CD4-positive, alpha-beta memory T cell (primary cell): ENCODE measurements at regions of chr1 and their contacts with region 1.

Region 1: DNA sequence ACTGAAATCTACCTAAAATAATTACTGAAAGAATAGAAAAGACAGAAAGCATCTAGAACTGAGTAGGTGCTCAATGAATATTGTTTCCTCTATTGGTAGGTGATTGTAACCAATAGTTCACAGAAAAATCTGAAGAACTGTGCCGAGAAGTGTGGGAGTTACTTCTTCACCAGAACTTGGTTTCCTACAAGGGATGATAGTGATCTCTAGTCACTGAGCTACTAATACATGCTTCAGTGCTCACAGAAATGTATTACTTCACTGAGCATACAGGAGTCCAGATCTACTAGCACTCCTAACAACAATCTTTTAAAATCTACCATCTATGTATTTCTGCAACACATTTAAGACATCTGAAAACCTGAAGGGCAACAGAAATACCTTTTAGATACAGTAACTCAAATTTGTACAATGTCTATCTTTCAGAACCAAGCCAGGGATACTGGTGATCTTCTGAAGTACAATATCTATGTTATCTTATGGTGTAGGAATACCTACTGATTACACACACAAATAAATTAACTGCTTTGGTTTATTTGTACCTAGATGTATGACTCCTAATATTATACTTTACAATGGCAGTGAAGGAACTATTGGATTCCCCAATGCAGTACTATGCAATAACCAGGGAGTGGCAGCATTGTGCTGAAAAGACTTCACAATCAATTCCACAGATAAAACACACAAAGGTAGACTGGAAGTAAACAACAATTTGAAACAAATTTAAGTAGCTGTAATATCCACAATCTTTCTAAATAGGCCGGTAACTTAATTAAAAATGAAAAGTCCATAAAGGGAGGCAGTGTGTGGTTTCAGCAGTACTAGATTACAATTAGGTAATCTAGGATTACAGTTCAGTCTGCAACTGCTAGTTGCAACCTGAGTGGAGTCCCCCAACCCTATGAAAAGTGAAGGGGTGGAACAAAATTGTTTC is 243.0 kb downstream of the SLC45A1 start:
- DNase-seq: peak; percentile 45 to 56 (median 51)
- H3K4me3 ChIP-seq: no peak overlapping the region
- H3K4me3 Mint-ChIP-seq: no peak overlapping the region
- H3K27ac ChIP-seq: no peak overlapping the region
- H3K27ac Mint-ChIP-seq: peak overlapping the region in 2 of 7 donors; percentile 3 to 39
- H3K4me1 ChIP-seq: no peaks in the 10 kb centered on the region
- H3K4me1 Mint-ChIP-seq: peaks cover 2 to 7% (median 5%) of the 10 kb centered on the region in 4 donors
- H3K27me3 ChIP-seq: no peaks in the 10 kb centered on the region
- H3K27me3 Mint-ChIP-seq: no peaks in the 10 kb centered on the region

Region 2: DNA sequence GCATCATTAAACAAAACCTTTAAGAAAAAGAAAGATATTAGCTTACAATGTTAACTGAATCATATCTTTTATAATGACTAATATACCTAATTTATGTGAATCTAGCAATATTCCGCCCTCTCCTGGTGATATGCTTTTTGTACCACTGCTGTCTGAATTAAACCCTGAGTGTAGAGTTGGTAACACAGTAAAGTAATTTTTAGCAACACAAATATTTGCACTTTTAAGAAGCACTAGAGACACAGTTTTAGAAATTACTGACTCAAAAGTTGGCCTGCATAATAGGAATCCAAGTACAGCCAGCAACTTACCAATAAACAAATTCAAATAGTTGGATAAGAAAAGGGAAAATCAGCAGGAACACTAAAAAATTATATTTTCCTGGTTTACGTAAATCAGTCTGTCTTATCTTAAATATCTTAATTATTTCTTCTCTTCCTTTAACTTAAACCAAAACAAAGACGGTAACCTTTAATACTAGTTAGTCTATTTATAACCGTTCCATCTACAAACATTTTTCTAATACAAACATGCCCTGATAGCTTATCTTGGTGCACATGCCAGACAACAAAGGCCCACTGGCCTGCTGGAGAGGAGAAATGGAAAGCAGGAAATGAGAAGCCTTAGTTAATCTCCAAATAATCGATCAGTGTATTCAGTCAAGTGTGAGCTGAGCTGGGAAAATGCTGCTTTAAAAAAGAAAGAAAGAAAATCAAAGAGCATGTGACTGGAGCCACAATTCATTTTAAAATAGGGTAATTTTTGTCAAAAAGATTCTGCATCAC is 10.5 kb after region 1 on chr1:
- CTCF ChIA-PET with region 1: interaction called, 18 read pairs
- POLR2A ChIA-PET with region 1: no interaction called
- intact Hi-C with region 1: no loop called
- DNase-seq: no peak
- H3K4me3 ChIP-seq: no peak overlapping the region
- H3K4me3 Mint-ChIP-seq: no peak overlapping the region
- H3K27ac ChIP-seq: no peak overlapping the region
- H3K27ac Mint-ChIP-seq: no peak overlapping the region
- H3K4me1 ChIP-seq: no peaks in the 10 kb centered on the region
- H3K4me1 Mint-ChIP-seq: no peaks in the 10 kb centered on the region
- H3K27me3 ChIP-seq: no peaks in the 10 kb centered on the region
- H3K27me3 Mint-ChIP-seq: no peaks in the 10 kb centered on the region

Region 3: GRCh38 chr1:8661185-8662110 is 100.6 kb after region 1 on chr1:
- CTCF ChIA-PET with region 1: interaction called, 10 read pairs
- POLR2A ChIA-PET with region 1: no interaction called
- intact Hi-C with region 1: no loop called
- DNase-seq: no peak
- H3K4me3 ChIP-seq: no peak overlapping the region
- H3K4me3 Mint-ChIP-seq: no peak overlapping the region
- H3K27ac ChIP-seq: no peak overlapping the region
- H3K27ac Mint-ChIP-seq: no peak overlapping the region
- H3K4me1 ChIP-seq: peaks cover 36% of the 10 kb centered on the region
- H3K4me1 Mint-ChIP-seq: peaks cover 0 to 10% (median 8%) of the 10 kb centered on the region in 4 donors
- H3K27me3 ChIP-seq: no peaks in the 10 kb centered on the region
- H3K27me3 Mint-ChIP-seq: no peaks in the 10 kb centered on the region

Region 4: DNA sequence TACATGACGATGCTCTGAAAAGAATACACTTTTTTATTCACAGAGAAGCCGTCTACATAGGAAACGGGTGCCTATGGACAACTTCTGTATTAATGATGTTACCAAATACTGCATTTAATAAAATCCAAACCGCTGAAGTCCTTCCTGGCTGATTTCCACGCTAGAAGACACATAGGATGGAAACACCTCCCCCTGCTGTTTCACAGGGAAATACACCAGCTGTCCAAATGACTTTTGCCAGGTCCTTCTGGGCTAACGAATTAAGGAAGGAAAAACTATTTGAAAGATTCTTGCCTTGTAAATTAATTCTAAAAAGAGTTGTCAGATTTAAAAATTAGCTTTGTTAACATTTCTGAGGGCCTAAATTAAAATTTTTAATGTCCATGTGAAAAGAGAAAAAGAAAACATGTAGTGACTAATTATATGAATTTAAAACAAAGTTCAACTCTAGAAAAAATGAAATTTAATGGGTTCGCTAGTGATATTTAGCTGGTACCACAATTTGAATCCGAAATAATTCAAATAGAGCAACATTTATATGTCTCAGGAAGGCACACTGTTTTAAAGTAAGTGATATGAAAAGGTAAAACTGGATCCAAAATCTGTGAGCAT is 110.5 kb after region 1 on chr1:
- CTCF ChIA-PET with region 1: interaction called, 85 read pairs
- POLR2A ChIA-PET with region 1: no interaction called
- intact Hi-C with region 1: loop called (anchors 1 kb)
- DNase-seq: peak in 4 of 5 donors; percentile 12 to 34 (median 25)
- H3K4me3 ChIP-seq: no peak overlapping the region
- H3K4me3 Mint-ChIP-seq: no peak overlapping the region
- H3K27ac ChIP-seq: no peak overlapping the region
- H3K27ac Mint-ChIP-seq: peak overlapping the region in 1 of 7 donors; percentile 60
- H3K4me1 ChIP-seq: peaks cover 24% of the 10 kb centered on the region
- H3K4me1 Mint-ChIP-seq: peaks cover 15 to 31% (median 20%) of the 10 kb centered on the region in 4 donors
- H3K27me3 ChIP-seq: no peaks in the 10 kb centered on the region
- H3K27me3 Mint-ChIP-seq: no peaks in the 10 kb centered on the region

Region 5: DNA sequence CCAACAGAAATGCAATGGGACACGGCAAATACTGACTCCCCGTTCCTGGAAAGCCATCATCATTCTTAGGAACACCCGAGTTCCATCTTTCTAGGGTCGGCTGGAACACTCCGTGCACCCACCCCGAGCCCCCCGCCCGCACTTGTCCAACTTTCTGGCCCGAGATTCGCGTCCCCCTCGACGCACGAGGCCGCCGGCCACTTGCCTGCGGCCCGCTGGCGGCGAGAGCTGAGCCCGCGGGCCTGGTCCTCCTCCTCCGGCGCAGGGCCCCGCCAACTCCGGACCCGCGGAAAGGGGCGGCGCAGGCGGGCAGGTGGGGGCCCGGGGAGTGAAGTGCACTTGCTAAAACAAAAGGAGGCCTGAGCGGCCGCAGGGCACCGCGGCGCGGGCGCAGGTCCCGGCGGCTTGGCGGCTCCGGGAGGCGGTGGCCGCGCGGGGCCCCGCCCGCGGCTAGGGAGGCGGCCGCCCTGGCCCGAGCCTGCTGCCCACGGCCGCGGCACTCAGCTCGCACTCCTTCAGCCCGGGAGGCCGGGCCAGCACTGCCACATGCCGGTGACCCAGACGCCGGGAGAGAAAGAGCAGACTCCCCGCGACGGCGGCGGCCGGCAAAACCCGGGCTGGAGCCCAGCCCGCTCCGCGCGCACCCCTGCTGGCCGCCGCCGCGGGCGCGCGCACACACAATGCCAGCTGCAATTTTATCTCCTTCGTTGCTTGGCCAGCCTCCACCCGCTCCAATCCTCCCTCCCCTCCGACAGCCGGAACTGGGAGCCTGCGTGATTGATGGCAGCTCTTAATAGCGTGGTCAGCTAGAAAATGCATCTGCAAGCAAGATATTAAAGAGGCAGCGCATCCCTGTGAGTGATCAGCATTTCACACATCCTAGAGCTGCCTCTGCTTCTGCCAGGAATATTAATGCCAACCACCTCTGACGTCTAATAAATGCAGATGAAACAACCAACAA is 142.3 kb after region 1 on chr1:
- CTCF ChIA-PET with region 1: interaction called, 11 read pairs
- POLR2A ChIA-PET with region 1: no interaction called
- intact Hi-C with region 1: no loop called
- DNase-seq: peak; percentile 31 to 56 (median 44)
- H3K4me3 ChIP-seq: peak overlapping the region in 1 of 2 donors; percentile 36
- H3K4me3 Mint-ChIP-seq: peak overlapping the region; percentile 81 to 91 (median 86)
- H3K27ac ChIP-seq: no peak overlapping the region
- H3K27ac Mint-ChIP-seq: peak overlapping the region; percentile 9 to 86 (median 58)
- H3K4me1 ChIP-seq: peaks cover 32% of the 10 kb centered on the region
- H3K4me1 Mint-ChIP-seq: peaks cover 15 to 30% (median 26%) of the 10 kb centered on the region in 4 donors
- H3K27me3 ChIP-seq: peaks cover 23% of the 10 kb centered on the region
- H3K27me3 Mint-ChIP-seq: peaks cover 25 to 26% of the 10 kb centered on the region in 2 donors

Region 6: DNA sequence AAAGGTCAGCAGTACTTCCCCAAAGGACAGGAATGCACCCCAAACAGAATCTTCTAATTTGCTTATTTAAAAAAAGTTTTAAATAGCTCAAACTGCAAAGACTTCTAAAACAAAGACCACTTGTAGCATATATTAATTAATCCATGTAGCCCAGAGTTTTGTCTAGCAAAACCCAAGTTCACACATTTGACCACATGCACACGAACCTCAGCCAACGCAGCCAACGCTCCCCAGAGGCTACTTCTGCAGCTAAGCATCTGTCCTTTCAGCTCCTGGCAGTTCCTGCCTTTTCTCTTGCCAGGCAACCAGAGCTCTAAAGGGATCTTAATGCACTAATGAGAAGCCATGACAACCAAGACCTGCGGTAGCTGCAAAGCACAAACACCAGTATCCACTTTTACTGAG is 166.9 kb after region 1 on chr1:
- CTCF ChIA-PET with region 1: interaction called, 192 read pairs
- POLR2A ChIA-PET with region 1: interaction called, 6 read pairs
- intact Hi-C with region 1: loop called (anchors 1 kb)
- DNase-seq: no peak
- H3K4me3 ChIP-seq: no peak overlapping the region
- H3K4me3 Mint-ChIP-seq: no peak overlapping the region
- H3K27ac ChIP-seq: no peak overlapping the region
- H3K27ac Mint-ChIP-seq: no peak overlapping the region
- H3K4me1 ChIP-seq: peaks cover 7% of the 10 kb centered on the region
- H3K4me1 Mint-ChIP-seq: peaks cover 3 to 12% (median 6%) of the 10 kb centered on the region in 4 donors
- H3K27me3 ChIP-seq: no peaks in the 10 kb centered on the region
- H3K27me3 Mint-ChIP-seq: no peaks in the 10 kb centered on the region